Astrocyte of the cerebellum (primary cell): ENCODE measurements at regions of chr6 and their contacts with region 1.

Region 1: DNA sequence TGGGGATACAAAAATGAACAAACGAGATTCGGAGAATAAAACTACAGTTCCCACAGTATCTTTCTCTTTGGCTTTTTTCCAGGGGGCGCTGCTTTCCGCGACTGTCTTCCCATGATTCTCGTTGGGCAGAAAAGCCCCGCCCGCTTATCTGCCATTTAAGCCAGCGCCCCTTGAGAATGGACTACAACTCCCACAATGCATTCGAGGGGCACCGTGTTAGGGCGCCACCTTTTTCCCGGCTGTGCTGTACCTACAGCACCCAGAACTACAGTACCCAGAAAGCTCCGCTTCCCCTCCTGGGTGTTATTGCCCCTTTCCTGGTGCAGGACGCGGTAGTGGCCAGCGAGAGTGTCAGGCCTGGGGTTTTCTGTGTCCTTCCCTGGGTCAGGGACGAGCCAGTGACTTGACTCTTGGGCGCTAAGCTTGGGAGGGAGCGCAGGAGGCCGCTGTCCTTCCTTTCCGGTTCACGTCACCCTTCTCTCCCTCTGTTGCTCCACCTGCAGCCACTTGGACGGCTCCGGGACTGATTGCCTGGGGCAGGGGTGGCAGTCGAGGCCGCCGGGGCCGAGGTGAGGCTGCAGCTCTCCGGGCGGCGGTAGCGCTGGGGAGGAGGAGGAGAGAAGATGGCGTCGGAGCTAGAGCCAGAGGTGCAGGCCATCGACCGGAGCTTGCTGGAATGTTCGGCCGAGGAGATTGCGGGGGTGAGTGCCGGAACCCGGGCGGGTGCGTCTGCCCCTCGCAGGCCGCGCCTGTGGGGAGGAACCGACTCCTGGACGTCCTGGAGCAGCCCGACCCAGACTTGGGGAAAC is at the start of gene UBR2:
- DNase-seq: peak; percentile 97
- H3K4me3 ChIP-seq: peak within 1 kb of the TSS; percentile 96
- CTCF ChIP-seq: peak; percentile 13

Region 2: GRCh38 chr6:41787219-41787917 is 776.5 kb before region 1 on chr6 and contains the start of gene TOMM6:
- in situ Hi-C with region 1: loop called (anchors 25 kb)
- DNase-seq: peak; percentile 88
- H3K4me3 ChIP-seq: peak within 1 kb of the TSS; percentile 89
- CTCF ChIP-seq: peak; percentile 75

Region 3: GRCh38 chr6:42511803-42512422 is 52.0 kb before region 1 on chr6:
- in situ Hi-C with region 1: no loop called
- DNase-seq: no peak
- H3K4me3 ChIP-seq: no peak overlapping the region
- CTCF ChIP-seq: no peak